ENCODE measurements at regions of chr17 and their contacts with region 1.

Region 1: DNA sequence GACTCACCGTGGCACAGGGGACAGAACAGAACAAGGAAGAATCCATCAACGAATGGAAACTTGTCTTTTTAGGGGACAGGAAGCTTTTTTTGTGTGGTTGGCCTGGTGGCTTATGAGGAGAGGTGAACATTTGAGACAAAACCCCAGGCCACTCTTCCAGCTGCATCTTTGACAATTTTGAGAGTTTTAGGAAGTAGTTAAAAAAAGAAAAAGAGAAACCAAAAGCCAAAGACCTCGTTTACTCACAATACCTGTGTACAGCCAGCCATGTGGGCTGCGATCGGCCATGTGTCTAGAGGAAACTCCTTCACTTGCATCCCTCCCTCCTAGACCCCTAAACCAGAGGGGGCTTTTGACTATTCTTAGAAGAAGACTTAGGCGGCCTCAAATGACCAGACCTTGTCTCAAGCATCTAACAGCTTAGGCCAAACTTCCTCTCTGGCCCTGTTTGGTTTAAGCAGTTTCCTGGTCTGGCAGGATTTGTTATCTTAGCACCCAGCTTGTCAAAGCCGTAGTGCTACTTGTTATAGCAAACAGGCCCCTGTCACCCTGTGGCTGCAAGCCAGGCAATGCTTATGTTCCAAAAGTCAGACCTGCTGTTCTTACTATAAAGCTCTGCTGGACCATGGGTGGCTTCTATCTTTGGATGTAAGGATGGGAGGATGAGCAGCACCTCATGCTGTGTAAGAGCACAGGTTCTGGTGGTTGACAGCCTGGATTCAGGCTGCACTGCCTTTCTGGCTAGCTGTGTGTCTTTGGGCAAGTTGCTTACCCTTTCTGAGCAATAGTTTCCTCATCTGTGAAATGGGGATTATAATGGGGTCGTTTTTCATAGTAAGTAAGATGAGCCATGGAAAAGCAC is 17.7 kb downstream of the KSR1 start:
- DNase-seq: peak; percentile 93
- H3K4me3 Mint-ChIP-seq: peak overlapping the region; percentile 42
- H3K27ac Mint-ChIP-seq: peak overlapping the region; percentile 98
- H3K4me1 Mint-ChIP-seq: peaks cover 94% of the 10 kb centered on the region
- H3K27me3 Mint-ChIP-seq: no peaks in the 10 kb centered on the region

Region 2: GRCh38 chr17:27293898-27294688 is 179.9 kb before region 1 on chr17 and contains the start of gene WSB1:
- CTCF ChIA-PET with region 1: no interaction called
- POLR2A ChIA-PET with region 1: interaction called, 10 read pairs
- intact Hi-C with region 1: loop called (anchors 2 kb)
- DNase-seq: peak; percentile 94
- H3K4me3 Mint-ChIP-seq: peak within 1 kb of the TSS; percentile 99
- H3K27ac Mint-ChIP-seq: peak within 1 kb of the TSS; percentile 100
- H3K4me1 Mint-ChIP-seq: peaks cover 39% of the 10 kb centered on the region
- H3K27me3 Mint-ChIP-seq: no peaks in the 10 kb centered on the region
- total RNA-seq, gene WSB1: 135 to 147 TPM

Region 3: DNA sequence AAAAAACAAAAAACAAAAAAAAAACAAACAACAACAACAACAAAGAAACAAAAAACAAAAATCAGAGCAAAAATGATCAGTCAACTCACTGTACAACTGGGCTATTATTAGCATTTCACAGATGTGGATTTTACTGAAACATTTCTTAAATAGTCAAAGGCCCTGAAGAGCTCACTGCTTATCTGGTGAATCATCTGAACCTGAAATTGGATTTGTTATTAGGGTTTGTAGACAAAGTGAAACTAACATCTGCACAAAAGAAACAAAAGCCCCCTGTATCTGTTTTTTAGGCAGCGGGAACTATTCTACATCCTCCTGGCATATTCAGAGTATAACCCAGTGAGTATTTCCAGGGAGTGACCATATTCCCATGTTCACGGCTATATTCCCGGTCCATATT is 50.3 kb before region 1 on chr17:
- CTCF ChIA-PET with region 1: no interaction called
- POLR2A ChIA-PET with region 1: no interaction called
- intact Hi-C with region 1: no loop called
- DNase-seq: no peak
- H3K4me3 Mint-ChIP-seq: no peak overlapping the region
- H3K27ac Mint-ChIP-seq: no peak overlapping the region
- H3K4me1 Mint-ChIP-seq: no peaks in the 10 kb centered on the region
- H3K27me3 Mint-ChIP-seq: no peaks in the 10 kb centered on the region

Region 4: DNA sequence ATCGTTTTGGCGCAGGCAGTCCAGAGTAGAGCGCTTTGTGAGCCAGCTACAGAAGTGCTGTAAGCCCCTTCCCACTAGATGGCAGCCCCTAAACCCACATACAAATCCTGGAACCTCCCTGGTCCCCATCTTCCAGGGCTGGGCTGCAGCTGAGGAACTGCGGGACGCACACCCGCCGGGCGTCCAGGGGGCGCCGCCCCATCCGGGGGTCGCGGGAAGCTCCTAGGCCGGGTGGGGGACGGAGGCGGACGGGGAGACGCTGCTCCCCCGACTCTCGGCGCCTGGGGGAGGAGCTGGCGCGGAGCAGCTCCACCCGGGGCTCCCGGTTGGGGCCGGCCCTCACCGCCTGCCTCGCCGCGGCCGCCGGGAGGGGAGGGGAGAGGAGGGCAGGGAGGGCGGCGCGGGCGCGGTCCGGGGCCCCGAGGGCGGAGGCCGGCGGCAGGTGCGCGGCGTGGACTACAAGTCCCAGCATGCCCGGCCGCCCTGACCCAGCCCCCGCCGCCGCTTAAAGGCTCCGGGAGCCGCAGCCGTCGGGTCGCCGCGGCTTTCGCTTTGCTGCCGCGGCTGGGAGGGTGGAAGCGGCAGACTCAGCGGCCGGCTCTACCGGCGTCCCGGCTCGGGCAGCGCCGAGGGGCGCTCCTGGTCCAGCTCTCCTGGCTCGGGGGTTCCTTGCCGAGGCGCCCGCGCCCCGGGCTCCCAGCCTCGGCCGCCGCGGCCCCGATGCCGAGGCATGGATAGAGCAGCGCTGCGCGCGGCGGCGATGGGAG is 17.9 kb before region 1 on chr17 and contains the start of gene KSR1:
- CTCF ChIA-PET with region 1: interaction called, 12 read pairs
- POLR2A ChIA-PET with region 1: interaction called, 12 read pairs
- intact Hi-C with region 1: loop called (anchors 1 kb)
- DNase-seq: peak; percentile 88
- H3K4me3 Mint-ChIP-seq: peak within 1 kb of the TSS; percentile 92
- H3K27ac Mint-ChIP-seq: peak within 1 kb of the TSS; percentile 80
- H3K4me1 Mint-ChIP-seq: peaks cover 40% of the 10 kb centered on the region
- H3K27me3 Mint-ChIP-seq: no peaks in the 10 kb centered on the region
- total RNA-seq, gene KSR1: 55.0 to 60.8 TPM

Region 5: GRCh38 chr17:27506348-27507231 is 32.6 kb after region 1 on chr17:
- CTCF ChIA-PET with region 1: no interaction called
- POLR2A ChIA-PET with region 1: no interaction called
- intact Hi-C with region 1: no loop called
- DNase-seq: no peak
- H3K4me3 Mint-ChIP-seq: no peak overlapping the region
- H3K27ac Mint-ChIP-seq: no peak overlapping the region
- H3K4me1 Mint-ChIP-seq: peaks cover 23% of the 10 kb centered on the region
- H3K27me3 Mint-ChIP-seq: no peaks in the 10 kb centered on the region

Region 6: DNA sequence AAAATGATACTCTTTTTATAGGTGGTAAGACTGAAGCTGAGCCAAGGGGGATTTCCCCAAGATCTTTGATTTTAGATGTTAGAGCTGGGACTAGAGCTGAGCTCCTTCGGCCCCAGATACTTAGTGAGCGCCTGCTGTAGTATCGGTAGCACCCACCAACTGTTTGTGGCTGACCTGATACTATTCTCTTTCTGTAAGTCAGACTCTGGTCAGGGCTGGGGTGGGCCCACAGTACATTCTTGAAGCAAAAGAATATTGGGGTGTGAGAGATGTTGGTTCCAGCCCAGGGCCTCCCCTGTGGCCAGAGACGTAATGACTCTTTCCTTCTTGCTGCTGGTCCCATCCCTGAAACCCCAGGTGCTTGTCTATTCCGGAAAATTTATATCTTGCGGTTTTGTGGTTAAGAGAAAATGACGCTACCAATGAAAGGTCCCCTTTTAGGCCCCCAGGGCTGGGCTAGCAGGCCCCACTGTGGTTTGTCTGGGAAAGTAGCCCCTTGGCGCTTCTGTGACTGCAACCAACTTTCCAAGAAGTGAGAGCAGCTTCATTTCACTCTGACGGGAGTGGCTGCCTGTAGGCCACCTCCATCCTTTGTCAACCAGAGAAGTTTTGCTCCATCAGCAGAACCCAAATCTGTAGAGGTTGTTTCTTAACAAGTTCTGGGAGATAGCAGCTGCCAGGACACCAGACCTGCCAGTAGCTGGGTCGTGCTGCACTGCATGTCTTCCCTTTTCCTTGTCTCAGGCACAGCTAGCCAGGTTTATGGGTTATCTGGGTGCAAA is 70.6 kb after region 1 on chr17:
- CTCF ChIA-PET with region 1: interaction called, 16 read pairs
- POLR2A ChIA-PET with region 1: interaction called, 47 read pairs
- intact Hi-C with region 1: loop called (anchors 1 kb)
- DNase-seq: peak; percentile 92
- H3K4me3 Mint-ChIP-seq: peak overlapping the region; percentile 64
- H3K27ac Mint-ChIP-seq: peak overlapping the region; percentile 90
- H3K4me1 Mint-ChIP-seq: peaks cover 78% of the 10 kb centered on the region
- H3K27me3 Mint-ChIP-seq: peaks cover 2% of the 10 kb centered on the region

Region 7: GRCh38 chr17:27578718-27579085 is 104.7 kb after region 1 on chr17:
- CTCF ChIA-PET with region 1: interaction called, 3 read pairs
- POLR2A ChIA-PET with region 1: interaction called, 17 read pairs
- intact Hi-C with region 1: loop called (anchors 1 kb)
- DNase-seq: peak; percentile 90
- H3K4me3 Mint-ChIP-seq: no peak overlapping the region
- H3K27ac Mint-ChIP-seq: peak overlapping the region; percentile 84
- H3K4me1 Mint-ChIP-seq: peaks cover 64% of the 10 kb centered on the region
- H3K27me3 Mint-ChIP-seq: no peaks in the 10 kb centered on the region

Measured in activated CD4-positive, alpha-beta memory T cell treated with anti-CD3 and anti-CD28 coated beads for 36 hours (primary cell).